Activated T-helper 2 cell treated with anti-CD3 and anti-CD28 coated beads, Interferon-gamma antibody, Interleukin-2, Interleukin-4, amounts not matched to agents 10 μg/mL and 5 μg/mL and 100 μg/mL, durations not matched to agents 14 hours and 24 hours and 36 hours (primary cell): ENCODE measurements at regions of chr4 and their contacts with region 1.

Region 1: DNA sequence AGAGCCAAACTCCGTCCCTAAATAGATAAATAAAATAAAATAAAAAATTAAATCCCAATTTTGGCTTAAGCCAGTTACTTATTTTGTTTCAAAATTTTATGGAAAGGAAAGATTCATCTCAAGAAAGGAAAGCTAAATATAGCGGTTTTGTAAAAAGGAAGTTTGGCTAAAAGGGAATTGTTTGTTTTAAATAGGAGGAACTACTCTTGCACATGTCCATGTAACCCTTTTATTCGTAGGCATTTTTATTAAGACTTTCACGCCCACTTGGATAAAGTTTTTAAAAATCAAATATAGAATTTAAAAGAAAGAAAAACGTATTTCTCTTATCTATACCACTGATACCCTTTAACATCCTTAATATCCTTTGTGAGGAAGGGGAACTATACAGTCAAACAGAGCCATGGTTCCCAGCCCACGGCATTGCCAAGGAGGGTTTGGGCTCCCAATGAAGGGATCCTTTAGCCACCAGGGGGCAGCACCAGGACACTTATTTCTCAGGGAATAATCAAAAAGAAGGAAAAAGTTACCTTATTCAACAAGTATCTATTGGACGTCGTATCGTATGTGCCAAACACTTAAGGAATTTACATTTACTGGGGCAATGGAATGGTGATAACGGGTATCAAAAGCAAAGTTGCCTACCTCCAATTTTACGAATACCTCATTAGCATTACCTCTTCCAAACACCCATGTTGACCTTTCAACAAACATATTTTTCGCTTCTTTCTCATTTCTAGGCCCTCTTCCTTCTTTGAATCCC is 27.7 kb downstream of the CDKN2AIP start:
- DNase-seq: peak; percentile 48
- H3K4me3 Mint-ChIP-seq: no peak overlapping the region
- H3K27ac Mint-ChIP-seq: no peak overlapping the region
- H3K4me1 Mint-ChIP-seq: peaks cover 5% of the 10 kb centered on the region
- H3K27me3 Mint-ChIP-seq: no peaks in the 10 kb centered on the region

Region 2: GRCh38 chr4:183600189-183600685 is 128.1 kb after region 1 on chr4:
- intact Hi-C with region 1: loop called (anchors 2 kb)
- DNase-seq: no peak
- H3K4me3 Mint-ChIP-seq: no peak overlapping the region
- H3K27ac Mint-ChIP-seq: no peak overlapping the region
- H3K4me1 Mint-ChIP-seq: peaks cover 2% of the 10 kb centered on the region
- H3K27me3 Mint-ChIP-seq: peaks cover 19% of the 10 kb centered on the region

Region 3: DNA sequence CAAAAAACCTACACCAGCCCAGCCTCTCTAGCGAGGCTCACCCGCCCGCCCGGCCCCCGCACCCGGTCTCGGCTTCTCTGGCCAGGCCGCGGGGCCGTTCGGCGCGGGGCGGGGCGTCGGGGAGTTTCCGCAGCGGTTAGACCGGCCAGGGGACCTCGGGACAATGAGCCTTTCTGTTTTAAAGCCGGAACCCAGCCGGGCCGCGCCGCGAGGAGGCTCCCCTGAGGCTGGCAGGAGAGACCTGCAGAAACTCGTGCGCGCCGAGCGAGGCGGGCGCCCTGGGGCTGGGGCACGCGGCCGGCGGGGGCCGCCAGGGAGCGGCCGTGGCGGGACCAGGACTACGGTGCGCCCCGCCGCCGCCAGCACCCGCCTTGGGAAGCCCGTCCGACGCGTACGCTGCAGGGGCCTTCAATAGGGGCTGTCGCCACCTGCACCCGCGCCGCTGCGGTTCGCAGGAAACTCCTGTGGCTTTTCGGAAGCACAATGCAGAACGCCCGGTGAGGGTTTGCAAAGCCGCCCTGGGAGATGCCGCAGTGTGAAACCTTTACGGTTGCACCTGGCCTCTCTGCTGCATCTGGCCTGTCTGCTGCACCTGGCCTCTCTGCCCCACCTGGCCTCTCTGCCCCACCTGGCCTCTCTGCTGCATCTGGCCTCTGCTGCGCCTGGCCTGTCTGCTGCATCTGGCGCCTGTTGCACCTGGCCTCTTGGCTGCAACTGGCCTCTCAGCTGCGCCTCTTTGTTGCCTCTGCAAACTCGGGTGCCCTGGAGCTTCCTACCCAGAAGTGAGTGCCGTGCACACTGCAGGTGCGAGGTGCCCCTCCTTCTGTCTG is 250.8 kb after region 1 on chr4:
- intact Hi-C with region 1: loop called (anchors 10 kb)
- DNase-seq: peak; percentile 37
- H3K4me3 Mint-ChIP-seq: peak overlapping the region; percentile 80
- H3K27ac Mint-ChIP-seq: no peak overlapping the region
- H3K4me1 Mint-ChIP-seq: peaks cover 9% of the 10 kb centered on the region
- H3K27me3 Mint-ChIP-seq: peaks cover 31% of the 10 kb centered on the region